B cell (primary cell): ENCODE measurements at regions of chr15 and their contacts with region 1.

Region 1: DNA sequence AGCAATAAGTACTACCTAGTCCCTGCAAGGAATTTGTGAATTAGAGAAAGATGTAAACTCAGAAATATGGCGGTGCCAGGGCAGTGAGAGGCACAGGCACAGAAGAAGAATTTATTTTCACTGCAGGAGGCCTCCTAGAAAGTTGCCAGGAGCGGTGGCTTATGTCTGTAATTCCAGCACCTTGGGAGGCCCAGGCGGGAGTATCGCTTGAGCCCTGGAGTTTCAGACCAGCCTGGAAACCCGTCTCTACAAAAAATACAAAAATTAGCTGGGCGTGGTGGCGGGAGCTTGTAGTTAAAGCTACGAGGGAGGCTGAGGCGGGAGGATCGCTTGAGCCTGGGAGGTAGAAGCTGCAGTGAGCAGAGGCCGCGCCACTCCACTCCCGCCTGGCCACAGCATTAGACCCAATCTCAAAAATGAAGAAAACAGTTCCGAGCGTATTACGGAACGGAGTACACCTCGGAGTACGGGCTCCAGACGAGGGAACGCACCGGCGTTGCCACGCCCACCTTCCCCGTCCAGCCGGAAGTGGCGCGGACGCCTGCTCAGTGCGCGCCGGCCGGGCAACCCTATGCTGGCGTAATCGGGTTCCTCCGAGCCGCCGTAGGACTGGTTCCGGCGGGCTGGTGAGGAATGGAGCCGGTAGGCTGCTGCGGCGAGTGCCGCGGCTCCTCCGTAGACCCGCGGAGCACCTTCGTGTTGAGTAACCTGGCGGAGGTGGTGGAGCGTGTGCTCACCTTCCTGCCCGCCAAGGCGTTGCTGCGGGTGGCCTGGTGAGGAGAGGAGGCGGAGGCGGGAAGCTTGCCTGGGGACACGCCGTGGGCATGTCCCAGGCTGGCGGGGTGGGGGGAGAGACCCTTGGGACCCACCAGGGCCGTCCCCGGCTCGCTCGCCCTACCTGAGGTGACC is at the start of gene FBXO22:
- DNase-seq: peak; percentile 93
- ATAC-seq: peak; percentile 97
- H3K4me3 ChIP-seq: peak within 1 kb of the TSS; percentile 78 to 97 (median 90)
- H3K4me3 Mint-ChIP-seq: peak within 1 kb of the TSS; percentile 100
- H3K27ac ChIP-seq: peak within 1 kb of the TSS; percentile 80 to 93
- H3K27ac Mint-ChIP-seq: peak within 1 kb of the TSS; percentile 97
- H3K4me1 ChIP-seq: peaks cover 12 to 13% of the 10 kb centered on the region in 2 donors
- H3K4me1 Mint-ChIP-seq: peaks cover 33% of the 10 kb centered on the region
- H3K27me3 ChIP-seq: no peaks in the 10 kb centered on the region
- H3K27me3 Mint-ChIP-seq: no peaks in the 10 kb centered on the region
- CTCF ChIP-seq: no peak
- total RNA-seq, gene FBXO22: 23.3 and 24.1 TPM in 2 replicates

Region 2: GRCh38 chr15:75738647-75739331 is 164.8 kb before region 1 on chr15:
- CTCF ChIA-PET with region 1: no interaction called
- POLR2A ChIA-PET with region 1: no interaction called
- intact Hi-C with region 1: loop called (anchors 10 kb)
- DNase-seq: peak; percentile 95
- ATAC-seq: peak; percentile 98
- H3K4me3 ChIP-seq: peak overlapping the region in 4 of 5 experiments; percentile 77 to 86 (median 82)
- H3K4me3 Mint-ChIP-seq: peak overlapping the region; percentile 90
- H3K27ac ChIP-seq: peak overlapping the region; percentile 54 to 72
- H3K27ac Mint-ChIP-seq: peak overlapping the region; percentile 67
- H3K4me1 ChIP-seq: peaks cover 6 to 17% of the 10 kb centered on the region in 2 donors
- H3K4me1 Mint-ChIP-seq: peaks cover 14% of the 10 kb centered on the region
- H3K27me3 ChIP-seq: peaks cover 0 to 7% (median 0%) of the 10 kb centered on the region in 4 experiments
- H3K27me3 Mint-ChIP-seq: peaks cover 11% of the 10 kb centered on the region
- CTCF ChIP-seq: no peak

Region 3: GRCh38 chr15:75842722-75843551 is 60.6 kb before region 1 on chr15 and contains the start of gene UBE2Q2:
- CTCF ChIA-PET with region 1: interaction called, 4 read pairs
- POLR2A ChIA-PET with region 1: interaction called, 5 read pairs
- intact Hi-C with region 1: loop called (anchors 1 kb)
- DNase-seq: peak; percentile 83
- ATAC-seq: peak; percentile 63
- H3K4me3 ChIP-seq: peak within 1 kb of the TSS; percentile 66 to 86 (median 83)
- H3K4me3 Mint-ChIP-seq: peak within 1 kb of the TSS; percentile 94
- H3K27ac ChIP-seq: peak within 1 kb of the TSS; percentile 65 to 68
- H3K27ac Mint-ChIP-seq: peak within 1 kb of the TSS; percentile 95
- H3K4me1 ChIP-seq: peaks cover 18 to 21% of the 10 kb centered on the region in 2 donors
- H3K4me1 Mint-ChIP-seq: peaks cover 36% of the 10 kb centered on the region
- H3K27me3 ChIP-seq: no peaks in the 10 kb centered on the region
- H3K27me3 Mint-ChIP-seq: no peaks in the 10 kb centered on the region
- CTCF ChIP-seq: no peak
- total RNA-seq, gene UBE2Q2: 31.2 and 33.6 TPM in 2 replicates

Region 4: DNA sequence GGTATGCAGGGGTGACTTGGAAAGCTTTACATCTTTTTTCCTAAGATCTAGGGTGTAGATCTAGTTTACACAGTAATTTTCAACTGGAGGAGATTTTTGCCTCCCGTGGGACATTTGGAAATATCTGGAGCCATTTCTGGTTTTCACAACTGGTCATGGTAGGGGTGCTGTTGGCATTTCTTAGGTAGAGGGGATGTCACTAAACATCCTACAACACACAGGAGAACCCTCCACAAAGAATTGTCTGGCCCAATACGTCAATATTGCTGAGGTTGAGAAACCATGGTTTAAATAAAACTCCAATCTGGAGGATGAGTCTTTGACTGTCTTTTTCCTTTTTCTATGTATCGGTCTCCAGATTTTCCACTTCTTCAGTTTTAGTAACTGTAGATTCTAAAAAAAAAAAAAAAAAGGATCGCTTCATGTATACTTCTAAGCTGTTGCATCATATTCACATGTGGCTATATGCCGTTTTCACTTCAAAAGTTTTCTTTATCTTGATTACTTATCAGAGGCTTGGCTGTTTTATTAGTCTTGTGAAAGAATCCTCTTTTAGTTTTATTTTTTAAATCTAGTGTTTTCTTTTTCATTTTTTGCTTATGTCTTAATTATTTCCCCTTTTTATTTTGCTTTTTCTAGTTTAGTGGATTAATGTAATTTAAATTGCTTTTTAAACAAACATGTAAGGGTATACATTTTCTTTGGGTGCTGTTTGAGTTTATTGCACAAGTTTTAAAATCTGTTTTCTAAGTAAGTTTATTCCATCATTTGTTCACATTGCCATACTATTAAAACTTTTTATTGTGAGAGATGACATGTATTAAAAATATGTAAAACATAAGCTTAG is 39.1 kb before region 1 on chr15:
- CTCF ChIA-PET with region 1: no interaction called
- POLR2A ChIA-PET with region 1: no interaction called
- intact Hi-C with region 1: loop called (anchors 5 kb)
- DNase-seq: no peak
- ATAC-seq: no peak
- H3K4me3 ChIP-seq: no peak overlapping the region
- H3K4me3 Mint-ChIP-seq: no peak overlapping the region
- H3K27ac ChIP-seq: no peak overlapping the region
- H3K27ac Mint-ChIP-seq: no peak overlapping the region
- H3K4me1 ChIP-seq: peaks cover 19 to 28% of the 10 kb centered on the region in 2 donors
- H3K4me1 Mint-ChIP-seq: peaks cover 30% of the 10 kb centered on the region
- H3K27me3 ChIP-seq: no peaks in the 10 kb centered on the region
- H3K27me3 Mint-ChIP-seq: no peaks in the 10 kb centered on the region
- CTCF ChIP-seq: no peak

Region 5: DNA sequence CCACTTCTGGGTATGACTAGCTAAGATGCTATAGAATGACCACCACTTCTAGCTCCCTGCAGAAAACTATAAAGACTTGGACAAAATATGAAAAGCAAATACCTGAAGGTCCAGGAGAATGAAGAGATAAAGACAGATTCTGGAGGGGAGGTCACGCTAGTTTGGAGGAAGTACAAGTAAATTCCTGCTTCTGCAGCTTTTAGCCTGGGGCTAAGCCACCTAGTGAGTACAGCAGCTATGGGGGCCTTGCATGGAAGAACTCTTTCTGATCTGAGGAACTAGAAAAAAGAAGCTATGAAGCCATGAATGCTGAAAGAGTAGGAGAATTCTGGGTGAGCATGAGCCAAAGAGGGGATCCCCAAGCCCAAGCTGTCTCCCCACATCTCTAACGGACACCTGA is 78.9 kb after region 1 on chr15:
- CTCF ChIA-PET with region 1: no interaction called
- POLR2A ChIA-PET with region 1: no interaction called
- intact Hi-C with region 1: no loop called
- DNase-seq: no peak
- ATAC-seq: no peak
- H3K4me3 ChIP-seq: no peak overlapping the region
- H3K4me3 Mint-ChIP-seq: no peak overlapping the region
- H3K27ac ChIP-seq: no peak overlapping the region
- H3K27ac Mint-ChIP-seq: no peak overlapping the region
- H3K4me1 ChIP-seq: no peaks in the 10 kb centered on the region
- H3K4me1 Mint-ChIP-seq: no peaks in the 10 kb centered on the region
- H3K27me3 ChIP-seq: peaks cover 0 to 3% (median 1%) of the 10 kb centered on the region in 4 experiments
- H3K27me3 Mint-ChIP-seq: peaks cover 27% of the 10 kb centered on the region
- CTCF ChIP-seq: no peak

Region 6: DNA sequence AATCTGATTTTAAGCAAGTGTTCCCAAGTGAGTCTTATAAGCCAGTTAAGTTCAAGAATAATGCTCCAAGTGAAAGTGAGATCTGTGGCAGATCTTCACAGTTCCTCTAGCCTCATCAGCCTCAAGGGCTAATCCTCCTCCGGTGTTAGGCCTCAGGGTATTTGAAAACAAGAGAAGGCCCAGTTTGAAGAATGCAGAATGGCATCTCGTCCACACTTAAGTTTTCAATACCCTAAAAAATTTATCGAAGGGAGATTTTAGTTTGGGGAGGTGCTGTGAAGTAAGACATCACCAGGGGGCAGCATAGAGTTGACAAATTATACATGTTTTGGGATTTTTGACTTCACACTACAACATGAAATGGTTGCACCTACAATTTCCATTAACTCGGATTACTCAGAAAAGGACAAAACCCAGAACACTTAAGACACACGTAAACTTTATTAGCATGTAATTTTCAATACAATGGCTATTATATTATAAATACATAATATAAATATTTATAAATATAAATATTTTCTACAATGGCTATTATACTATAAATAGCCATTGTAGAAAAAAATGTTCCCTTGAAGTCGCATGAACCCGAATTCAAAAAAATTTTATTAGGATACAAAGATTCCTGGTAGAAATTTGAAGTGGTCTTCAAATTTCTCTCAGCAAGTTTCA is 153.9 kb after region 1 on chr15:
- CTCF ChIA-PET with region 1: no interaction called
- POLR2A ChIA-PET with region 1: no interaction called
- intact Hi-C with region 1: loop called (anchors 5 kb)
- DNase-seq: peak; percentile 73
- ATAC-seq: peak; percentile 37
- H3K4me3 ChIP-seq: peak overlapping the region in 4 of 5 experiments; percentile 7 to 37 (median 17)
- H3K4me3 Mint-ChIP-seq: peak overlapping the region; percentile 51
- H3K27ac ChIP-seq: peak overlapping the region; percentile 54 to 83
- H3K27ac Mint-ChIP-seq: peak overlapping the region; percentile 69
- H3K4me1 ChIP-seq: peaks cover 33 to 35% of the 10 kb centered on the region in 2 donors
- H3K4me1 Mint-ChIP-seq: peaks cover 36% of the 10 kb centered on the region
- H3K27me3 ChIP-seq: peaks cover 0 to 31% (median 19%) of the 10 kb centered on the region in 4 experiments
- H3K27me3 Mint-ChIP-seq: peaks cover 26% of the 10 kb centered on the region
- CTCF ChIP-seq: peak; percentile 80